Right lobe of liver (tissue), 6 donors: ENCODE measurements at regions of chr3 and their contacts with region 1.

Region 1: DNA sequence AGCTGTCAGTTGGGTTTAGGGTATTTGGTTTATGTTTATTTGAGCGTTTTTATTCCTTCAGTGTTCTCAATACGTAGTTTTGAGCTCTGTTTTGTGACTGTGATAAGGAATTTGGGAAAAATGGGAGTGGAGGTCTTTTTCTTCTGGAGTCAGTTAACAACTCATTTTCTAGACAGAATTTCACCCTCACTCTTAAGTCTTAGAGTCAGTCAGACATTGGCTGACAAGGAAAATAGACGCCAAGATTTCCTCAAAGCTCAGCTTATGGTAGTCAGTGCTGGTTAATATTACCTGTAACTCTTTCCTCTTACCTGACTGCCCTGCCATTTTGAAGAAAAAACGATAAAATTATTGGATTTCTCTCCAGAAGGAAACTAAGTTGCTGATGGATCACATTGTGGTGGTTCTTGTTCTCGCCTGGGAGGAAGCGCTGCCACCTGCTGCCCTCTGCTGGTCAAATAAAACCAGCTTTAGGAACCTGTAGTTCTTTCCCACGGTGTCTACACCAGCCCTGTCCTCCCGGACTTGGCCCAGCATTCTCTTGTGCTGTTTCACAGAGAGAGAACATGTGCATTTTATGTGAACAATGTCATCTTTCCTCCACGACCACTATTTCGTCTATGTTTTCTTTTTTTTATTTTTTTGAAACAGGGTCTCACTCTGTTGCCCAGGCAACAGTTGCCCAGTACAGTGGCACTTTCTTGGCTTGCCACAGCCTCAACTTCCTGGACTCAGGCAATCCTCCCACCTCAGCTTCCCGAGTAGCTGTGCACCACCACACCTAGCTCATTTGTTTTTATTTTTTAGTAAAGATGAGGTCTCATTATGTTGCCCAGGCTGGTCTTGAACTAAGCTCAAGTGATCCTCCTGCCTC is 41.4 kb upstream of the UMPS start:
- DNase-seq: peak; percentile 75 to 85 (median 81)
- ATAC-seq: peak; percentile 93 to 97 (median 96)
- H3K4me3 ChIP-seq: no peak overlapping the region
- H3K27ac ChIP-seq: peak overlapping the region in 2 of 3 donors; percentile 24 to 73
- H3K4me1 ChIP-seq: peaks cover 0 to 17% (median 3%) of the 10 kb centered on the region in 4 donors
- H3K27me3 ChIP-seq: no peaks in the 10 kb centered on the region
- CTCF ChIP-seq: peak; percentile 83 to 94 (median 92)
- POLR2A ChIP-seq: no peak

Region 2: DNA sequence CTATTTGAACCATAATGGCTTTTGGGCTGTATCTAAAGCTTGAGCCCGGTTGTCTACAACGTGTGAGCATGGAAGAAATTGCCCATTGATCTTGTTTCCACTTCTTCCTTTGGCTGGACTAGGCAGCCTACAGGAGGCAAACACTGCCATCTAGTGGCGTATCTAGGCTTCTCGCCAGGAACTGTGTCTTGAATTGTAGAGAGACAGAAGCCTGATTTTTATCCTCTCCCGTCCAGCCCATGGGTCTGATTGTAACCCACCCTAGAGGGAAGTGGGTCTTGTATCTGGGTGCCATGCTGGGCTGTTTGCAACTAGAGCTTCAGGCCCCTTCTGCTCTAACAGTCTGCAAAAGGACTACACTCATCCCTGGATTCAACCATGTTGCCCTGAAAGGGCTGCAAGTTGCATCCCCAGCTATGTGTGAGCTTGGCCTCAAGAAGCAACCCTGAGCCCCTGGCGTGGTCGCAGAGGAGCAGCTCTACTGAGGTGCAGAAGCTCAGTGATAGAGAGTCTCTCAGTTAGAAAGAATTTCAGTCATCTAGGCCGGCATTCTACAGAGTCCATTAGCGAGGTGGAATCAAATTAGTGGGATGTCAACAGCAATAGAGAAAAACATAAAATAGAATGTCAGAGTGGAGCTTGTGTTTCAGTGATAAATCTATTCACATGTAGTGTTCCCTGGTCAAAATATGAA is 128.8 kb before region 1 on chr3:
- intact Hi-C with region 1: loop called (anchors 5 kb)
- DNase-seq: peak; percentile 60 to 79 (median 68)
- ATAC-seq: peak; percentile 79 to 90 (median 84)
- H3K4me3 ChIP-seq: no peak overlapping the region
- H3K27ac ChIP-seq: no peak overlapping the region
- H3K4me1 ChIP-seq: peaks cover 0 to 18% (median under 1%) of the 10 kb centered on the region in 4 donors
- H3K27me3 ChIP-seq: no peaks in the 10 kb centered on the region
- CTCF ChIP-seq: peak; percentile 74 to 91 (median 88)
- POLR2A ChIP-seq: no peak

Region 3: DNA sequence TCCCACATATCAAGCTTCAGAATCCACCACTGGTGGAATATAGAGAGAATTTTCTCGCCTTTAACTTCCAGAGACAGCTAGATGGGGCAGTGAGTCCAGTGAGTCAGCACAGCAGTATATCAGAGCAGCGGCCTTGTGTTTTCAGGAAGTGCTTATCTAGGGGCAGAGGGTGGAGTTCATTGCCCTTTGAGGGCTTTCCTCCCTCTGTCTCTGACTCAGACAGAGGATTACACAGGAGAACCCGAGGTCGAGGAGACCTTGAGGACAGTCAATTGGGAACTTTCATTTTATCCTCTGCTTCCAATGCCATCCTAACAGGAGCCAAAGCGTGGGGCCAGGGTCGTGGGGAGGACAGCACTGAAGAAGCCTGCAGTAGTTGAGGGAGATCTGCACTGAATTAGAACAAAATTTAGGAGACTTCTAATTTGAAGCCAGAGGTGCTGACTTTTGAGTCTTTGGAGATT is 68.2 kb before region 1 on chr3:
- intact Hi-C with region 1: loop called in 1 of 2 experiments (anchors 5 kb)
- DNase-seq: peak; percentile 64 to 88 (median 67)
- ATAC-seq: peak; percentile 95 to 99 (median 96)
- H3K4me3 ChIP-seq: no peak overlapping the region
- H3K27ac ChIP-seq: peak overlapping the region; percentile 65 to 82 (median 71)
- H3K4me1 ChIP-seq: peaks cover 0 to 63% (median 25%) of the 10 kb centered on the region in 4 donors
- H3K27me3 ChIP-seq: no peaks in the 10 kb centered on the region
- CTCF ChIP-seq: peak; percentile 17 to 44 (median 40)
- POLR2A ChIP-seq: no peak